ENCODE measurements at regions of chr19 and their contacts with region 1.

Region 1: DNA sequence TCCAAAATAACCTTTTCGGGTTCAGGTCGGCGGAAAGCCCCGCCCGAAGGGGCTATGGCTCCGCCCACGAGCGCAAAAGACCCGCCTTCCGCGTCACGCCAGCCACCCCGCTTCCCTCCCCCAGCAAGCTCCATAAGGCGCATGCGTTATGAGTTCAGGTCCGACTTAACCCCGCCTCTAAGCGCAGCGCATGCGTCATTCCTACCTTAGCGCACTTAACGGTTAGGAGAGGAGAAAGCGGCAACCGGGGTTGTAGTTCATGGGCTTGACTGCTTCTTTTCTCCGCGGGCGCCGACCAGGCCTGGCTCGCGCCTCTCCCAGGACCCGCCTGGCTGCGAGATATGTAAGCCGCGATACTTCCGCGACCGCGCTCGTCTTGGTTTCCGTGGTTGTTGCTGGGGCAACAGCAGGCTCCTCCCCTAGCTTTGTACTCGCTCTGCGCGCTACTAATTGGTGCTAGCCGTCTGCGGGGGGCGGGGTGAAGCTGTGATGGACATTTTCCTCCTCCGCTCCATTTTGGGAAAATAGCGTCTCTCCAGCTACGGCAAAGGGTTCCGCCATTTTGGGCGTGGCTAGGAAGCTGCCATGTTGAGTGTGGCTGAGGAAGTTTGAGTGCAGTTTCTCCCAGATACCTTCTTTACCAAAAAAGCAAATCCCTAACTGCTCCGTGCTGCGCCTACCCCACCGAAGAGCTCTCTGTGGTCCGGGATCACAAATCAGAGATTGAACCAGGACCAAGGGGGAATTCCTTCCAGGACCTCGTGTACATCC is at the start of gene B9D2:
- DNase-seq: peak; percentile 97 to 99 (median 98)
- ATAC-seq: peak; percentile 92
- H3K4me3 ChIP-seq: peak within 1 kb of the TSS; percentile 66
- H3K4me3 Mint-ChIP-seq: peak within 1 kb of the TSS; percentile 94
- H3K27ac ChIP-seq: peak within 1 kb of the TSS; percentile 98 to 99
- H3K27ac Mint-ChIP-seq: peak within 1 kb of the TSS; percentile 98
- H3K4me1 ChIP-seq: peaks cover 35% of the 10 kb centered on the region
- H3K4me1 Mint-ChIP-seq: peaks cover 39% of the 10 kb centered on the region
- H3K27me3 ChIP-seq: no peaks in the 10 kb centered on the region
- H3K27me3 Mint-ChIP-seq: no peaks in the 10 kb centered on the region
- CTCF ChIP-seq: no peak
- total RNA-seq, gene B9D2: 21.1 to 26.8 TPM

Region 2: DNA sequence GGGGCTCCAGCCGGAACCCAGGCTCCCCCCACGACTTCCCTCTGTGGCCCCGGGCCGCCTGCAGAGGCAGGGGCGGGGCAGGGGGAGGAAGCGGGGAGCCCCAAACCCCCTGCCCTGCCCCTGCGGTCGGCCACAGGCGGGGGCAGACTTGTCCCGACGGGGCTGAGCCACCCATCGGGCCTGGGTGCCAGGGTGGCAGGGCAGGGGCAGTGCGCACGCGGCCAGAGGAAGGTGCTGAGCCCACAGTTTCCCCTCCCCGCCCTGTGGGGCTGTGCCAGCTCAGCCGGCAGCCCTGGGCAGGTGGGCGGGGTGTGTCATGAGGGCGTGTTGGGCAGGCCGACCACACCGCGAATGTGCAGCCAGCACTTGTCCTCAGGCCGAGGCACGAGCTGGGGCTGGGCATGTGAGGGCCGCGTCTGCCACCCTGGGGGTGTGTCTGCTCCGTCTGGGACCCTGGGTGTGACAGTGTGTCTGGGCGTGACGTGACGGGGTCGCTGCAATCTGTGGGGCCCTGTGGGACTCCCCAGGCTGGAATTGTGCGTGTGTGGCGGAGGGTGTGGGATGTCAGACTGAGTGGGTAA is 36.3 kb before region 1 on chr19:
- CTCF ChIA-PET with region 1: no interaction called
- POLR2A ChIA-PET with region 1: interaction called, 19 read pairs
- intact Hi-C with region 1: loop called in 1 of 2 experiments (anchors 5 kb)
- DNase-seq: peak; percentile 47 to 97 (median 76)
- ATAC-seq: peak; percentile 65
- H3K4me3 ChIP-seq: peak overlapping the region; percentile 44
- H3K4me3 Mint-ChIP-seq: peak overlapping the region; percentile 82
- H3K27ac ChIP-seq: peak overlapping the region; percentile 74 to 89
- H3K27ac Mint-ChIP-seq: peak overlapping the region; percentile 97
- H3K4me1 ChIP-seq: peaks cover 99% of the 10 kb centered on the region
- H3K4me1 Mint-ChIP-seq: peaks cover 75% of the 10 kb centered on the region
- H3K27me3 ChIP-seq: no peaks in the 10 kb centered on the region
- H3K27me3 Mint-ChIP-seq: no peaks in the 10 kb centered on the region
- CTCF ChIP-seq: no peak

Region 3: GRCh38 chr19:41397086-41398049 is 33.4 kb after region 1 on chr19 and contains the starts of genes BCKDHA and EXOSC5:
- CTCF ChIA-PET with region 1: no interaction called
- POLR2A ChIA-PET with region 1: interaction called, 5 read pairs
- intact Hi-C with region 1: loop called (anchors 1 kb)
- DNase-seq: peak; percentile 97 to 100 (median 99)
- ATAC-seq: peak; percentile 98
- H3K4me3 ChIP-seq: peak within 1 kb of the TSS; percentile 82
- H3K4me3 Mint-ChIP-seq: peak within 1 kb of the TSS; percentile 96
- H3K27ac ChIP-seq: peak within 1 kb of the TSS; percentile 91 to 99
- H3K27ac Mint-ChIP-seq: peak within 1 kb of the TSS; percentile 99
- H3K4me1 ChIP-seq: peaks cover 38% of the 10 kb centered on the region
- H3K4me1 Mint-ChIP-seq: peaks cover 57% of the 10 kb centered on the region
- H3K27me3 ChIP-seq: no peaks in the 10 kb centered on the region
- H3K27me3 Mint-ChIP-seq: no peaks in the 10 kb centered on the region
- CTCF ChIP-seq: no peak
- total RNA-seq, gene BCKDHA: 12.2 to 13.1 TPM
- total RNA-seq, gene EXOSC5: 6.5 to 7.5 TPM

Region 4: GRCh38 chr19:41439441-41440222 is 75.7 kb after region 1 on chr19 and contains the start of gene DMAC2:
- CTCF ChIA-PET with region 1: interaction called, 9 read pairs
- POLR2A ChIA-PET with region 1: interaction called, 20 read pairs
- intact Hi-C with region 1: loop called in 1 of 2 experiments (anchors 2 kb)
- DNase-seq: peak; percentile 86 to 97 (median 93)
- ATAC-seq: peak; percentile 99
- H3K4me3 ChIP-seq: peak within 1 kb of the TSS; percentile 90
- H3K4me3 Mint-ChIP-seq: no peak within 1 kb of the TSS
- H3K27ac ChIP-seq: peak within 1 kb of the TSS; percentile 60 to 77
- H3K27ac Mint-ChIP-seq: no peak within 1 kb of the TSS
- H3K4me1 ChIP-seq: peaks cover 16% of the 10 kb centered on the region
- H3K4me1 Mint-ChIP-seq: no peaks in the 10 kb centered on the region
- H3K27me3 ChIP-seq: no peaks in the 10 kb centered on the region
- H3K27me3 Mint-ChIP-seq: peaks cover 13% of the 10 kb centered on the region
- CTCF ChIP-seq: peak; percentile 65
- total RNA-seq, gene DMAC2: 21.6 to 25.7 TPM

Region 5: DNA sequence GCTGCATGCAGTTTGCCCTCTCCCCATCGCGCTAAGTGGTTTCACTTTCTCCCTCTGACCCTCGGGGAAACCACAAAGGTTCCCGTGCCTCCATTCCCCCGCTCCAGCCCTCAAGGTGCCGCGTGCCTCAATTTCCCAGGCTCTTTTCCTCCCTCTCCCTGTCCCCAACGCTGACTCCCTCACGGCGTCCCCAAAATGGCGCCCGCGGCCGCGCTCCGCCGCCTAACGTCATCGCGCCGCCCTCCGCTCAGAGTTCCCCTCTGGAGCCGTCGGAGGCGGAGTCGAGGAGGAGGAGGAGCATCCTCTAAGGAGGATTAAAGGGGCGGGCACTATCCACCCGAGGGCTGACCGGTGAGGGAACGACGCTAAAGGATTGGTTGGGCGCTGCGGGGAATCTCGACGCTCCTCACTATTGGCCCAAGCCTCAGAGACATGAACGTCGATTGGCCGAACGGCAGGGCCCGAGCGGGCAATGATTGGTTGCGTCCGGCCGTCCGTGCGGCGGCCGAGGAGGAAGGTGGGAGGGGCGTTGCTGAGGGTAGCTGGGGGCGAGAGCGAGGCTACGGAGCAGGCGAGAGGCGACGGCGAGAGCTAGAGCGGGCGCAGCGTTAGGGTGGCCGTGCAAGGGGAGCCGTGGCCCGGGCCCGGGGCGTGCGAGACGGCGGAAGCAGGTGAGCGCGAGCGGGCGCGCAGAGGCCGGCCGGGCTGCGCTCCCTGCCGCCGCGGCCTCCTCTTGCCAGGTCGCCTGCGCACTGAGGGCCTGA is 711.9 kb after region 1 on chr19 and contains the start of gene ZNF574:
- CTCF ChIA-PET with region 1: no interaction called
- POLR2A ChIA-PET with region 1: no interaction called
- intact Hi-C with region 1: loop called in 1 of 2 experiments (anchors 5 kb)
- DNase-seq: peak; percentile 95 to 100 (median 97)
- ATAC-seq: peak; percentile 96
- H3K4me3 ChIP-seq: peak within 1 kb of the TSS; percentile 63
- H3K4me3 Mint-ChIP-seq: peak within 1 kb of the TSS; percentile 97
- H3K27ac ChIP-seq: peak within 1 kb of the TSS; percentile 97 to 98
- H3K27ac Mint-ChIP-seq: peak within 1 kb of the TSS; percentile 99
- H3K4me1 ChIP-seq: peaks cover 29% of the 10 kb centered on the region
- H3K4me1 Mint-ChIP-seq: peaks cover 32% of the 10 kb centered on the region
- H3K27me3 ChIP-seq: no peaks in the 10 kb centered on the region
- H3K27me3 Mint-ChIP-seq: no peaks in the 10 kb centered on the region
- CTCF ChIP-seq: no peak
- total RNA-seq, gene ZNF574: 21.5 to 24.0 TPM

Measured in CD4-positive, alpha-beta T cell (primary cell).